HEK293 (cell line): ENCODE measurements at regions of chr17 and their contacts with region 1.

Region 1: DNA sequence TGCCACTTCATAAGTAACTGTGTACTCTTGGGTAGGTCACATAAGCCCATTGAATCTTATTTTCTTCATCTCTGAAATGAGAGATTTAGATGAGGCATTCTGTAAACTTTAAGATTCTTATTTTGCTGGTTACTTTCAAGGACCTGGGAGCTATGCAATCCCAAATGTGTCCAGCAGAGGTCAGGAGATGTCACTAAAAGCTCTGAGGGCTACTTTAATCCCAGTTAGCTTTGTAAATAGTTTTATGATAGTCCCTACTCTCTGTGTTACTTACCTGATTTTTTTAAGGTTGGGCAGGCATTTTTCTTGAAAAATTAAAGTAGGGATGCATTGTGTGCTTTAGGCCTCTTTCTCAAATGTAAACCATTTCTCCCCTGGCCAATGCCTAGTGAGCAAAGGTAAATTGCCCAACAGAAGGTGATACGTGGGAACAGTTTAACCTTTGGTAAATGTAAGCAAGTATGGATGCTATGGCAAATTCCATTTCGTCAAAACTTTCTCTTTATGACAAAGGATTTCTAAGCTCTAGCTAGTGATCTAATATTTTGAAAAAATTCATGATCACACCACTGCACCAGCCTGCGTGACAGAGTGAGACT is 57.1 kb upstream of the WSB1 start:
- H3K4me3 ChIP-seq: no peak overlapping the region
- H3K27ac ChIP-seq: no peak overlapping the region
- H3K4me1 ChIP-seq: peaks cover 2% of the 10 kb centered on the region; the same call in 1 of the 2 replicates
- CTCF ChIP-seq: peak; percentile 47; the same call in 1 of the 2 replicates

Region 2: GRCh38 chr17:27217631-27218030 is 19.2 kb before region 1 on chr17:
- CTCF ChIA-PET with region 1: interaction called, 18 read pairs
- POLR2A ChIA-PET with region 1: no interaction called
- H3K4me3 ChIP-seq: no peak overlapping the region
- H3K27ac ChIP-seq: no peak overlapping the region
- H3K4me1 ChIP-seq: no peaks in the 10 kb centered on the region
- CTCF ChIP-seq: no peak

Region 3: DNA sequence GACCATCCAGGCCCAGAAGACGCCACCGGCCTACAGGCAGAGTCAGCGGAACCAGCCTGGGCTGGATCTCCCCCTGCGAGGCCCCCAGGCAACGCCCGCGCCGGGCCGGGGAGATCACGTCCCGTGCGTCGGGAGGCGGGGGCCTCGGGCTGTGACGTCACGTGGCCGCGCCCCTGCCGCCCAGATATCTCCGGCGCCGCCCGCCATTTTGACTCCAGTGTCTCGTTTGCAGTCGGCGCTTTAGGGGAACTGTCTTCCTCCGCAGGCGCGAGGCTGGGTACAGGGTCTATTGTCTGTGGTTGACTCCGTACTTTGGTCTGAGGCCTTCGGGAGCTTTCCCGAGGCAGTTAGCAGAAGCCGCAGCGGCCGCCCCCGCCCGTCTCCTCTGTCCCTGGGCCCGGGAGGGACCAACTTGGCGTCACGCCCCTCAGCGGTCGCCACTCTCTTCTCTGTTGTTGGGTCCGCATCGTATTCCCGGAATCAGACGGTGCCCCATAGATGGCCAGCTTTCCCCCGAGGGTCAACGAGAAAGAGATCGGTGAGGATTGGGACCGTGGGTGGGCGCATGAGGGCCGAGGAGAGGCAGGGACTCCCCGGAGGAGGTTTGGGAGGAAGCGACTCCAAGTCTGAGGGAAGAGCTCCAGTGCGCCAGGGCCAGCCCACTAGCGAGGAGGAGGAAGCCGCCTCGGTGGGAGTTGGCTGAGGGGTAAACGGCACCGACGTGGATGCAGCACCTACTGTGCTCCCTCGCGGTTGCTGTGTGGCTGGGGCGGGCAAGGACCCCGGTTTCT is 57.3 kb after region 1 on chr17 and contains the start of gene WSB1:
- CTCF ChIA-PET with region 1: interaction called, 27 read pairs
- POLR2A ChIA-PET with region 1: interaction called, 12 read pairs
- H3K4me3 ChIP-seq: peak within 1 kb of the TSS; percentile 75
- H3K27ac ChIP-seq: peak within 1 kb of the TSS; percentile 94
- H3K4me1 ChIP-seq: peaks cover 6% of the 10 kb centered on the region
- CTCF ChIP-seq: peak; percentile 76

Region 4: GRCh38 chr17:27323524-27324206 is 86.8 kb after region 1 on chr17:
- CTCF ChIA-PET with region 1: interaction called, 27 read pairs
- POLR2A ChIA-PET with region 1: no interaction called
- H3K4me3 ChIP-seq: no peak overlapping the region
- H3K27ac ChIP-seq: no peak overlapping the region
- H3K4me1 ChIP-seq: peaks cover 3% of the 10 kb centered on the region; the same call in 1 of the 2 replicates
- CTCF ChIP-seq: no peak

Region 5: DNA sequence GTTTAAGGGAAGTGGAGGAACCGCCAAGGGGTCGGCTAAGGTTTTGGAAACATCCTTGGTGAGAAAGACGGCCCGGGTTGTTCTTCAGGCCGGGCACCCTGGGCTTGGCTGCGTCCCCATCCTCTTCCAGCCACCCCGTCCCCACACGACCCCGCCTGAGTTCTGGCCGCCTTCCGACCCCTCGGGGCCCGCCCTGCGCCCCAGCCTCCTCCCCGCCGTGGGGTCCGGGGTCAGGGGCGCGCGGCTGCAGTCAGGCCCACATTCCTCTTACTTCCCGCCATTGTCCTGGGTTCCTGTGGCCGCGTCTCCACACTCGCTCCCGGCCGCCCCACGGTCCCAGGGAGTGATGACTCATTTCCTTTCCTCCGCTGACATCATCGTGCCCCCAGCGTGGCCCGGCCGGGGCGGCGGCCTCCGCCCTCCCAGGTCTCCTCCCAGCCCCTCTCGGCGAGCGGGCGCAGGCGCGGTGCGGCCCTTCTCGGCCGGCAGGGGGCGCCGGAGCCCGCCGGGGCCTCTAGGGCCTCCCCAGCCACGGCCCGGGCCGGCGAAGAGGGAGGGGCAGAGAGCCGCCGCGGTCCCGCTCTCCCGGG is 116.7 kb after region 1 on chr17:
- CTCF ChIA-PET with region 1: interaction called, 11 read pairs
- POLR2A ChIA-PET with region 1: no interaction called
- H3K4me3 ChIP-seq: peak overlapping the region; percentile 79
- H3K27ac ChIP-seq: peak overlapping the region; percentile 85
- H3K4me1 ChIP-seq: no peaks in the 10 kb centered on the region; the same call in 1 of the 2 replicates
- CTCF ChIP-seq: 0 out of 2 replicates have a peak, but pooled peaks have one; percentile 9

Region 6: GRCh38 chr17:27455914-27456680 is 219.3 kb after region 1 on chr17 and contains the start of gene KSR1:
- CTCF ChIA-PET with region 1: interaction called, 10 read pairs
- POLR2A ChIA-PET with region 1: no interaction called
- H3K4me3 ChIP-seq: peak within 1 kb of the TSS; percentile 70
- H3K27ac ChIP-seq: peak within 1 kb of the TSS; percentile 54
- H3K4me1 ChIP-seq: peaks cover 8% of the 10 kb centered on the region
- CTCF ChIP-seq: peak; percentile 85